Left ventricle myocardium superior (tissue), 1 donor: ENCODE measurements at regions of chr1 and their contacts with region 1.

Region 1: DNA sequence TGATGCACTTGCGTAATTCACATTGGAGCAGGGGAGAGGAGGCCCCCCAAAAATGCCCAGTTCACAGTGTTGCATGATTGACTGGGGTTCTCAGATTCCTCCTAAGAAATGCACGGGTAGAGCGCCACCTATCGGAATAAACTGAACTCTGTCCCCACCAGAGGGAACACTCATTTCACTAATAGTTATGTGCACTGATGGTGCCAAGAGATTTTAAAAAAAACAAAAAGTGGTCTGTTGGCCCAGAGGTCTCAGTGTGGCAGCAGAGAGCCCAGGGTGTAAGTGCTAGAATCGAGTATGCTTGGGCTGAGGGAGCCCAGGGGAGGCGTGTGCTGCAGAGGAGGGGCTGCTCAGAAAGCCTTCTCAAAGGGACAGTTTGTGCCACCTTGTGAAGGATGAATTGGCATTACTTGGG is 6.9 kb downstream of the PINK1 start:
- DNase-seq: no peak
- ATAC-seq: peak; percentile 54

Region 2: GRCh38 chr1:20528221-20528620 is 112.0 kb before region 1 on chr1:
- intact Hi-C with region 1: loop called (anchors 5 kb)
- DNase-seq: no peak
- ATAC-seq: no peak